ENCODE measurements at regions of chr10 and their contacts with region 1.

Region 1: GRCh38 chr10:72331601-72332422 is 22.9 kb downstream of the DNAJB12 start:
- DNase-seq: peak; percentile 94
- H3K4me3 ChIP-seq: no peak overlapping the region; a peak in 1 of 4 replicates
- H3K27ac ChIP-seq: peak overlapping the region; percentile 28 to 99; a peak in 3 of 4 replicates
- H3K4me1 ChIP-seq: peaks cover 16 to 86% of the 10 kb centered on the region in 2 experiments
- H3K27me3 ChIP-seq: no peaks in the 10 kb centered on the region
- CTCF ChIP-seq: 0 out of 2 replicates have a peak, but pooled peaks have one; percentile 20
- EP300 ChIP-seq: peak; percentile 37 to 84; a peak in 2 of 4 replicates
- RAD21 ChIP-seq: peak; percentile 27

Region 2: GRCh38 chr10:72260588-72261322 is 71.1 kb before region 1 on chr10:
- CTCF ChIA-PET with region 1: interaction called, 13 read pairs
- POLR2A ChIA-PET with region 1: interaction called, 10 read pairs
- DNase-seq: peak; percentile 95
- H3K4me3 ChIP-seq: peak overlapping the region; percentile 52 to 64
- H3K27ac ChIP-seq: peak overlapping the region; percentile 41 to 96; a peak in 3 of 4 replicates
- H3K4me1 ChIP-seq: peaks cover 20 to 28% of the 10 kb centered on the region in 2 experiments
- H3K27me3 ChIP-seq: no peaks in the 10 kb centered on the region
- CTCF ChIP-seq: no peak; the same call in 1 of the 2 replicates
- EP300 ChIP-seq: no peak
- RAD21 ChIP-seq: no peak

Region 3: DNA sequence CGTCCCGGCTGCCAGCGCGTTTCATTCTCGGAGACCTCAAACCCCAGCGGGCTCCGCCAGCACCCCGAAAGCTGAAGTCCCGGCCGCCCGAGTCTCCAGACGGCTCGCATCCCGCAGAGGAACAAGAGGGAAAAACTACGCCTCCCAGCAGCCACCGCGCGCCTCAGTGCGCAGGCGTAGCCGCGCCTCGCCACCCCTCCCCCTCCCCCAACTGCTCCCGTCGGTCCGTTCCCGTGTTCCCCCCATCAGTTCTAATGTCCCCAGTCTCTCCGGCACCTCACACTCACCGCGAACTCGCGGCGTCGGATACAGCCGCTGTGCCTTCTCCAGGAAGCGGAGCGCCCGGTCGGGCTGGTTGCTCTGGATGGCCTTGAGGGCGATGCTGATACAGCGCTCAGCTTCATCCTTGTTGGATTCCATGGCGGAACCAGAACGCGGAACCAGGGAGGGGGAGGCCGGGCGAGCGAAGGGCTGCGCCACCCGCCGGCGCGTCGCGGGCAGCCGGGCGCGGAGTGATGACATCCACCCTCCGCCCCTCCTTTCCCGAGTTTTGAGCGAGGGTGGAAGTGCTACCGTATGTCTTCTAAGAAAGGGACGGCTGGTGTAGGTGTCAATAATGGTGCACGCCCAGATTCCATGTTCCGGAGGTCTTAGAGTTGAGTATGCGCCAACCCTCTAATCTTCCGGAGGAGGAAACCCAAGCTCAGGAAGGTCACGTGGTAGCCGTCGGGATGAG is 22.8 kb after region 1 on chr10 and contains the start of gene DNAJB12:
- CTCF ChIA-PET with region 1: interaction called, 86 read pairs
- POLR2A ChIA-PET with region 1: interaction called, 4 read pairs
- DNase-seq: peak; percentile 95
- H3K4me3 ChIP-seq: peak within 1 kb of the TSS; percentile 86 to 99
- H3K27ac ChIP-seq: peak within 1 kb of the TSS; percentile 99
- H3K4me1 ChIP-seq: peaks cover 9 to 15% of the 10 kb centered on the region in 2 experiments; a peak in 1 of 4 replicates
- H3K27me3 ChIP-seq: no peaks in the 10 kb centered on the region
- CTCF ChIP-seq: no peak
- EP300 ChIP-seq: peak in 1 of 2 experiments; percentile 40; a peak in 1 of 4 replicates
- RAD21 ChIP-seq: no peak
- polyA plus RNA-seq, gene DNAJB12: 22.9 and 25.8 TPM in 2 replicates